CD4-positive, alpha-beta memory T cell (primary cell): ENCODE measurements at regions of chr2 and their contacts with region 1.

Region 1: GRCh38 chr2:159904127-159904958 is 106.3 kb upstream of the CD302 start:
- DNase-seq: peak; percentile 79 to 85 (median 82)
- H3K4me3 ChIP-seq: peak within 1 kb of the TSS; percentile 92 to 97
- H3K4me3 Mint-ChIP-seq: peak within 1 kb of the TSS; percentile 98 to 100 (median 99)
- H3K27ac ChIP-seq: peak within 1 kb of the TSS; percentile 82
- H3K27ac Mint-ChIP-seq: peak within 1 kb of the TSS; percentile 97 to 100 (median 98)
- H3K4me1 ChIP-seq: peaks cover 21% of the 10 kb centered on the region
- H3K4me1 Mint-ChIP-seq: peaks cover 18 to 43% (median 30%) of the 10 kb centered on the region in 4 donors
- H3K27me3 ChIP-seq: no peaks in the 10 kb centered on the region
- H3K27me3 Mint-ChIP-seq: no peaks in the 10 kb centered on the region

Region 2: GRCh38 chr2:159286709-159287441 is 617.5 kb before region 1 on chr2:
- CTCF ChIA-PET with region 1: no interaction called
- POLR2A ChIA-PET with region 1: interaction called, 3 read pairs
- intact Hi-C with region 1: loop called (anchors 1 kb)
- DNase-seq: peak; percentile 94 to 95 (median 95)
- H3K4me3 ChIP-seq: peak overlapping the region; percentile 20 to 67
- H3K4me3 Mint-ChIP-seq: peak overlapping the region; percentile 85 to 92 (median 89)
- H3K27ac ChIP-seq: peak overlapping the region; percentile 64
- H3K27ac Mint-ChIP-seq: peak overlapping the region; percentile 61 to 93 (median 82)
- H3K4me1 ChIP-seq: peaks cover 13% of the 10 kb centered on the region
- H3K4me1 Mint-ChIP-seq: peaks cover 15 to 30% (median 23%) of the 10 kb centered on the region in 4 donors
- H3K27me3 ChIP-seq: no peaks in the 10 kb centered on the region
- H3K27me3 Mint-ChIP-seq: no peaks in the 10 kb centered on the region

Region 3: DNA sequence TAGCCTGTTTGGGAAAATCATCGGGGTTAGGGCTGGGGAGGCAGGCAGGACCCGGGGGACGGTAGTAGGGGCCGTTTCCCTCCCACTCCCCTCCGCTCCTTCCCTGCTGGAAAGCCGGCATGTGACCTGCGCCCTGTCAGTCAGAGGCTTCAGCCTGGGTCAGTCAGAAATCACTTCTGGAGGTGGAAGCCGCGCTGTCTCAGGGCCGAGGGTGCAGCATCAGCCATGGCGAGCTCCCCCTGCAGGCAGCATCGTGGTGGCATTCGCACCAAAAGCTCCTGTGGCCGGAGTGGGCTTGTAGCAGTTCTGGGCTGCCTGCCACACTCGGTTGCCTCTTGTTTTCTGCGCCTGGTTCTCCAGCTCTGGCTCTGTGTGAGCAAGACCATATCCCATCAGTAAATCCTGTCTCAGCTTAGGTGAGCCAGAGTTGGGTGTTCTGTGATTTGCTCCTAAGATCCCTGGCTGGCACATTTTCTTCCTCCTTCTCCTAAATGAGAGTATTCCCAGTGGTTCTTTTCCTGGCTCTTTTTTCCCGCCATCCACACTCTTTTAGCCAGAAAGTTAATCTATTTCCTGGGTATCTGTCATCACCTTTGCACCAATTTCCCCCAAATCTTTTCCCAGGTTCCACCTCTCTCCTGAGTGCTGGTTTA is 17.5 kb after region 1 on chr2:
- CTCF ChIA-PET with region 1: interaction called, 11 read pairs
- POLR2A ChIA-PET with region 1: interaction called, 4 read pairs
- intact Hi-C with region 1: loop called (anchors 1 kb)
- DNase-seq: peak; percentile 51 to 58 (median 57)
- H3K4me3 ChIP-seq: no peak overlapping the region
- H3K4me3 Mint-ChIP-seq: no peak overlapping the region
- H3K27ac ChIP-seq: no peak overlapping the region
- H3K27ac Mint-ChIP-seq: no peak overlapping the region
- H3K4me1 ChIP-seq: no peaks in the 10 kb centered on the region
- H3K4me1 Mint-ChIP-seq: peaks cover 0 to 5% (median 3%) of the 10 kb centered on the region in 4 donors
- H3K27me3 ChIP-seq: no peaks in the 10 kb centered on the region
- H3K27me3 Mint-ChIP-seq: peaks cover 16 to 23% of the 10 kb centered on the region in 2 donors